Naive thymus-derived CD4-positive, alpha-beta T cell (primary cell): ENCODE measurements at regions of chr1 and their contacts with region 1.

Region 1: GRCh38 chr1:180631766-180632325 is at the start of gene XPR1:
- DNase-seq: peak; percentile 80 to 99 (median 96)
- ATAC-seq: peak; percentile 99
- H3K4me3 ChIP-seq: peak within 1 kb of the TSS; percentile 85
- H3K4me3 Mint-ChIP-seq: no peak within 1 kb of the TSS
- H3K27ac ChIP-seq: peak within 1 kb of the TSS; percentile 94
- H3K27ac Mint-ChIP-seq: peak within 1 kb of the TSS in 5 of 9 donors; percentile 91 to 95 (median 93)
- H3K4me1 ChIP-seq: peaks cover 12 to 16% of the 10 kb centered on the region in 2 donors
- H3K4me1 Mint-ChIP-seq: peaks cover 0 to 19% (median 13%) of the 10 kb centered on the region in 7 donors
- H3K27me3 ChIP-seq: no peaks in the 10 kb centered on the region
- H3K27me3 Mint-ChIP-seq: peaks cover 0 to 10% (median 5%) of the 10 kb centered on the region in 5 donors
- total RNA-seq, gene XPR1: 12.9 to 19.7 (median 15.4) TPM

Region 2: DNA sequence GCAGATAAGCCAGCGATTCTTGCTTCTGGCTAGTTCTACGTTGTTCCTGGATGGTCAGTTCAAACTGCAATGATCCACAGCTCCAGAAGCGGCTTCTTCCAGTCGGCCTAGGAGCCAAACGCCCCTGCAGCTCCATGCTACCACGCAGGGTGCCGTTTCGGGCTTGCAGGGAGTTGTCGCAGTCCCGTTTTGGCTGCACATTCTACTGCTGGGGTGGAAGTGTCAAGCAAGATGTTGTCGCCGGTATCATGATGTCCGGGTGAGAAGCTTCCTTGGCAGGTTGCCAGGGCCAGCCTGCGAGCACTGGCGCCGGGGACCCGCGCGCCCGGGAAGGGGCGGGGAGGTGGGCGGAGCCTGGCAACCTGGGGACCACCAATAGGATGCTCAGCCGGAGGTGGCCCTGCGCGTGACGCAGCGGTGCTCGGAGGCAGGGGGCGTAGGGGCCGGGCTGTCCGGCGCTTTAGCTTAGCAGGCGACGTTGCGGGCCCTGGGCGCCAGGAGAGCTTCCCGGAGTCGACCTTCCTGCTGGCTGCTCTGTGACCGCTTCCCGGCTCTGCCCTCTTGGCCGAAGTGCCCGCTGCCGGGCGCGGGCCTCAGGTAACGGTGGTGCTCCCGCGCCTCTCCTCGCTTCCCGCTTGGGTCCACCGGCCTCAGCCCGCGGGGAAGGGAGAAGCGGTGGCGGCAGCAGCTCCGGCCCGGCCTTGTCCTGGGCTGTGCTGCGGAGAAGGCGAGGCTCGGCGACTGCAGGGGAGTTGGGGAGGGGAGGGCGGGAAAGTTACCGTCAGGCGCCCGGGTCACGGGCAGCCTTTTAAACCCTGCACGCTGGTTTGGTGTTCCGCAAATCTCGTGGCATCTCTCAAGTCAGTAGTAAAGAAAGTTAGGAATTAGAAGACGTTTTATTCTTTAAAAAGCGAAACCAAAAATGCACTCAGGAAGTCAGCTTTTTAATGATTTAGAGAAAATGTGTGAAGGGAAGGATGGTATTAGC is 1338.2 kb before region 1 on chr1 and contains the start of gene SOAT1:
- CTCF ChIA-PET with region 1: no interaction called
- POLR2A ChIA-PET with region 1: no interaction called
- intact Hi-C with region 1: loop called in 1 of 2 experiments (anchors 10 kb)
- DNase-seq: peak; percentile 85 to 94 (median 90)
- ATAC-seq: peak; percentile 98
- H3K4me3 ChIP-seq: peak within 1 kb of the TSS; percentile 78
- H3K4me3 Mint-ChIP-seq: peak within 1 kb of the TSS; percentile 83 to 97 (median 92)
- H3K27ac ChIP-seq: peak within 1 kb of the TSS; percentile 96
- H3K27ac Mint-ChIP-seq: peak within 1 kb of the TSS; percentile 79 to 97 (median 93)
- H3K4me1 ChIP-seq: peaks cover 21 to 33% of the 10 kb centered on the region in 2 donors
- H3K4me1 Mint-ChIP-seq: peaks cover 28 to 51% (median 45%) of the 10 kb centered on the region in 7 donors
- H3K27me3 ChIP-seq: no peaks in the 10 kb centered on the region
- H3K27me3 Mint-ChIP-seq: no peaks in the 10 kb centered on the region
- total RNA-seq, gene SOAT1: 40.6 to 52.8 (median 45.0) TPM

Region 3: DNA sequence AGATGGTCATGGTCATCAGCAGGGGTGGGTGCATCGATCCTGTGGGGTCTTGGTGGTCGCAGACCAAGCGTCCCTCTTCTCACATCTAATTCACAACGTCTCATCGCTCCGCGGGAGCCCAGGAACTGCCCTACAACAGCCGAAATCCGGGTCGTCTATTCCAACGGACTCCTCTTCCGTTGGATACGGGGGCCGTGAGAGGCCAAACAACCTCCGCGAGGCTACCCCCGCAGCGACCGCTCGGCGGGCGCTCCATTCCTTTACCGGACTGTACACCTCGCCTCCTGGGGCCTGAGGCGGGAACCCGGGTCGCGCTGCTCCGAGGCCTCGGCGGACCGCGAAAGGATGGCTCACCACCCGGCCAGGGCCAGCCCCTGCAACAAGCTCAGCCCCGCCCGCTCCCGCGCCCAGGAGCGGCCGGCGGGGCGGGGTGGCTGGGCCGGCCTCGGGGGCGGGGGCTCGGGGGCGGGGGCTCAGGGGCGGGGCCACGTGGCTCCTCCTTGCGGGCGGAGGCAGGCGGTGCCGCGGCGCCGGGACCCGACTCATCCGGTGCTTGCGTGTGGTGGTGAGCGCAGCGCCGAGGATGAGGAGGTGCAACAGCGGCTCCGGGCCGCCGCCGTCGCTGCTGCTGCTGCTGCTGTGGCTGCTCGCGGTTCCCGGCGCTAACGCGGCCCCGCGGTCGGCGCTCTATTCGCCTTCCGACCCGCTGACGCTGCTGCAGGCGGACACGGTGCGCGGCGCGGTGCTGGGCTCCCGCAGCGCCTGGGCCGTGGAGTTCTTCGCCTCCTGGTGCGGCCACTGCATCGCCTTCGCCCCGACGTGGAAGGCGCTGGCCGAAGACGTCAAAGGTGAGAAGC is 477.3 kb before region 1 on chr1 and contains the start of gene QSOX1:
- CTCF ChIA-PET with region 1: no interaction called
- POLR2A ChIA-PET with region 1: no interaction called
- intact Hi-C with region 1: loop called (anchors 5 kb)
- DNase-seq: peak; percentile 81 to 89 (median 86)
- ATAC-seq: peak; percentile 97
- H3K4me3 ChIP-seq: peak within 1 kb of the TSS; percentile 94
- H3K4me3 Mint-ChIP-seq: peak within 1 kb of the TSS; percentile 80 to 99 (median 91)
- H3K27ac ChIP-seq: peak within 1 kb of the TSS; percentile 78
- H3K27ac Mint-ChIP-seq: peak within 1 kb of the TSS; percentile 81 to 95 (median 86)
- H3K4me1 ChIP-seq: peaks cover 7 to 20% of the 10 kb centered on the region in 2 donors
- H3K4me1 Mint-ChIP-seq: peaks cover 24 to 45% (median 37%) of the 10 kb centered on the region in 7 donors
- H3K27me3 ChIP-seq: no peaks in the 10 kb centered on the region
- H3K27me3 Mint-ChIP-seq: no peaks in the 10 kb centered on the region
- total RNA-seq, gene QSOX1: 22.1 to 55.6 (median 25.6) TPM

Region 4: GRCh38 chr1:180533266-180533987 is 98.4 kb before region 1 on chr1:
- CTCF ChIA-PET with region 1: no interaction called
- POLR2A ChIA-PET with region 1: no interaction called
- intact Hi-C with region 1: loop called in 1 of 2 experiments (anchors 10 kb)
- DNase-seq: peak; percentile 21 to 65 (median 40)
- ATAC-seq: peak; percentile 81
- H3K4me3 ChIP-seq: no peak overlapping the region
- H3K4me3 Mint-ChIP-seq: no peak overlapping the region
- H3K27ac ChIP-seq: no peak overlapping the region
- H3K27ac Mint-ChIP-seq: no peak overlapping the region
- H3K4me1 ChIP-seq: no peaks in the 10 kb centered on the region
- H3K4me1 Mint-ChIP-seq: peaks cover 0 to 6% (median 0%) of the 10 kb centered on the region in 7 donors
- H3K27me3 ChIP-seq: peaks cover 0 to 4% of the 10 kb centered on the region in 2 donors
- H3K27me3 Mint-ChIP-seq: peaks cover 0 to 34% (median 0%) of the 10 kb centered on the region in 5 donors

Region 5: DNA sequence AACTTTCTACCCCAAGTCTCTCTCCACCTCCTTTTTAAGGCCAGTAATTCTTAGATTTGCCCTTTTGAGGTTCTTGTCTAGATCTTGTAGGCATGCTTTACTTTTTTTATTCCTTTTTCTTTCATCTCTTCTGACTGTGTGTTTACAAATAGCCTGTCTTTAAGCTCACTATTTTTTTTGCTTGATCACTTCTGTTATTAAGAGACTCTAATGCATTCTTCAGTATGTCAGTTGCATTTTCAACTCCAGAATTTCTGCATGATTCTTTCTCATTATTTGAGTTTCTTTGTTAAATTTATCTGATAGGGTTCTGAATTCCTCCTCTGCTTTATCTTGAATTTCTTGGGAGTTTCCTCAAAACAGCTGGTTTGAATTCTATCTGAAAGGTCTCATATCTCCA is 30.9 kb after region 1 on chr1:
- CTCF ChIA-PET with region 1: no interaction called
- POLR2A ChIA-PET with region 1: no interaction called
- intact Hi-C with region 1: no loop called
- DNase-seq: no peak
- ATAC-seq: no peak
- H3K4me3 ChIP-seq: no peak overlapping the region
- H3K4me3 Mint-ChIP-seq: no peak overlapping the region
- H3K27ac ChIP-seq: no peak overlapping the region
- H3K27ac Mint-ChIP-seq: no peak overlapping the region
- H3K4me1 ChIP-seq: no peaks in the 10 kb centered on the region
- H3K4me1 Mint-ChIP-seq: peaks cover 0 to 27% (median 16%) of the 10 kb centered on the region in 7 donors
- H3K27me3 ChIP-seq: no peaks in the 10 kb centered on the region
- H3K27me3 Mint-ChIP-seq: no peaks in the 10 kb centered on the region

Region 6: DNA sequence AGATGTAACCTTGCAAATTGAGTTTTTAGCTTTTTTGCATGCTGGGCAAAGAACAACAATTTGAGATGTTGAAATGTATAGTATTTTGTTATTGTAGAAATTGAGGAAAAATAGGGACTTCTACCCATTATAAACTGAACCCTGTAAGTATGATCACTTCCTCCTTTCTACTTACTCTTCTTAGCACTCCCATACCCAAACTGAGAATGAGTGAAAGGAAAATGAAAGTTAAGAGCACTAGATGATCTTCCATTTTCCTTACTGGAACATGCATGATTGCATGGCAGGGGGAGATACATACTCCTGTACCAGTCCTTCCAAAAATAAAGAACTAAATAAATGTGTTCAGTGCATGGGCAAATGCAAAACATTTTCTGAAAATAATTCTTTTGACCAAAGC is 173.5 kb after region 1 on chr1:
- CTCF ChIA-PET with region 1: no interaction called
- POLR2A ChIA-PET with region 1: no interaction called
- intact Hi-C with region 1: no loop called
- DNase-seq: no peak
- ATAC-seq: no peak
- H3K4me3 ChIP-seq: no peak overlapping the region
- H3K4me3 Mint-ChIP-seq: peak overlapping the region in 1 of 10 donors; percentile 29
- H3K27ac ChIP-seq: no peak overlapping the region
- H3K27ac Mint-ChIP-seq: no peak overlapping the region
- H3K4me1 ChIP-seq: no peaks in the 10 kb centered on the region
- H3K4me1 Mint-ChIP-seq: peaks cover 0 to 6% (median 0%) of the 10 kb centered on the region in 7 donors
- H3K27me3 ChIP-seq: no peaks in the 10 kb centered on the region
- H3K27me3 Mint-ChIP-seq: no peaks in the 10 kb centered on the region

Region 7: GRCh38 chr1:180954005-180954800 is 322.4 kb after region 1 on chr1:
- CTCF ChIA-PET with region 1: no interaction called
- POLR2A ChIA-PET with region 1: no interaction called
- intact Hi-C with region 1: loop called in 1 of 2 experiments (anchors 2 kb)
- DNase-seq: peak; percentile 32 to 79 (median 61)
- ATAC-seq: peak; percentile 91
- H3K4me3 ChIP-seq: peak overlapping the region; percentile 59
- H3K4me3 Mint-ChIP-seq: peak overlapping the region; percentile 67 to 83 (median 80)
- H3K27ac ChIP-seq: peak overlapping the region; percentile 65
- H3K27ac Mint-ChIP-seq: peak overlapping the region in 3 of 9 donors; percentile 17 to 72 (median 72)
- H3K4me1 ChIP-seq: peaks cover 0 to 6% of the 10 kb centered on the region in 2 donors
- H3K4me1 Mint-ChIP-seq: peaks cover 0 to 12% (median 4%) of the 10 kb centered on the region in 7 donors
- H3K27me3 ChIP-seq: no peaks in the 10 kb centered on the region
- H3K27me3 Mint-ChIP-seq: no peaks in the 10 kb centered on the region

Region 8: DNA sequence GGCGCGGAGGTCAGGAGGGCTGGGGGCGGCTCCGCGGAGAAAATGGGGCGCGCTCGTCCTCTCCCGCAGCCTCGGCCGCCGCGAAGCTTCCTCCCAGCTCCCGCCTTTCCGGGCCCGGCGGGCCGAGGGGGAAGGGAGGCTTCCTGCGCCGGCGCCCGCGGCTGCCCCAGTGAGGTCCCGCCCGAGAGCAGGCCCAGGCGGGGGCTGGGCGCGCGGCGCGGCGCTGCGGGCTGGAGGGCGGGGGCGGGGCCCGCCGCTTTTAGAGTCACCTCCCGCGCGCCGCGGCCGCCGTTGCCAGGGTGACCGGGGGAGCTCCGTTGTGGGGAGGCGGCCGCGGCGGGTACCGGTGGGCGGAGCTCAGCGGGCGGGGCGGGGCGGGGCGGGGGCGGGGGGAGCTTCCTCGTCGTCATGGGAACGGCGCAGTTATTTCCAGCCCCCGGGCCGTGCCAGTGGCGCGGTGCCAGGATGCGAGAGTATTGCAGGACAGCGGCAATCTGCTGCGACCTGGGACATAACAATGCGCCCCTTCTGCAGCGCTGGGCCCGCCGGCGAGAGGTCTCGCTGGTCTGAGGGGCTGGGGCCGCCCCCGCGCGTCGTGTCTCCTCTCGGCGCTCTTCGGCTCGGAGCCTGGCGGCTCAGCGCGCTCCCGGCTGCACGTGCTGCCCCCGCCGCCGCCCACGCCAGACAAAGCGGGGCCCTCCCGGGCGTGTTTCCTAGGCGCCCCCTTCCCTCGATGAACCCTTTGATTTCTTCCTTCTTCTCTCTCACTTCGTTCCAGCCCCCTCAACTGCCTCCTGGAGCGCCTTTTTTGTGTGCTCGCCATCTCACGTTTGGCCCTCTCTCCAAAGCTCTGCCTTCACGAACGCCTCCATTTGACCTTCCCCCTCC is 473.5 kb after region 1 on chr1:
- CTCF ChIA-PET with region 1: no interaction called
- POLR2A ChIA-PET with region 1: no interaction called
- intact Hi-C with region 1: loop called in 1 of 2 experiments (anchors 2 kb)
- DNase-seq: peak; percentile 81 to 94 (median 90)
- ATAC-seq: peak; percentile 94
- H3K4me3 ChIP-seq: peak overlapping the region; percentile 61
- H3K4me3 Mint-ChIP-seq: peak overlapping the region; percentile 84 to 96 (median 91)
- H3K27ac ChIP-seq: peak overlapping the region; percentile 85
- H3K27ac Mint-ChIP-seq: peak overlapping the region; percentile 69 to 97 (median 89)
- H3K4me1 ChIP-seq: peaks cover 16 to 20% of the 10 kb centered on the region in 2 donors
- H3K4me1 Mint-ChIP-seq: peaks cover 22 to 76% (median 61%) of the 10 kb centered on the region in 7 donors
- H3K27me3 ChIP-seq: no peaks in the 10 kb centered on the region
- H3K27me3 Mint-ChIP-seq: peaks cover 0 to 43% (median 0%) of the 10 kb centered on the region in 5 donors

Region 9: DNA sequence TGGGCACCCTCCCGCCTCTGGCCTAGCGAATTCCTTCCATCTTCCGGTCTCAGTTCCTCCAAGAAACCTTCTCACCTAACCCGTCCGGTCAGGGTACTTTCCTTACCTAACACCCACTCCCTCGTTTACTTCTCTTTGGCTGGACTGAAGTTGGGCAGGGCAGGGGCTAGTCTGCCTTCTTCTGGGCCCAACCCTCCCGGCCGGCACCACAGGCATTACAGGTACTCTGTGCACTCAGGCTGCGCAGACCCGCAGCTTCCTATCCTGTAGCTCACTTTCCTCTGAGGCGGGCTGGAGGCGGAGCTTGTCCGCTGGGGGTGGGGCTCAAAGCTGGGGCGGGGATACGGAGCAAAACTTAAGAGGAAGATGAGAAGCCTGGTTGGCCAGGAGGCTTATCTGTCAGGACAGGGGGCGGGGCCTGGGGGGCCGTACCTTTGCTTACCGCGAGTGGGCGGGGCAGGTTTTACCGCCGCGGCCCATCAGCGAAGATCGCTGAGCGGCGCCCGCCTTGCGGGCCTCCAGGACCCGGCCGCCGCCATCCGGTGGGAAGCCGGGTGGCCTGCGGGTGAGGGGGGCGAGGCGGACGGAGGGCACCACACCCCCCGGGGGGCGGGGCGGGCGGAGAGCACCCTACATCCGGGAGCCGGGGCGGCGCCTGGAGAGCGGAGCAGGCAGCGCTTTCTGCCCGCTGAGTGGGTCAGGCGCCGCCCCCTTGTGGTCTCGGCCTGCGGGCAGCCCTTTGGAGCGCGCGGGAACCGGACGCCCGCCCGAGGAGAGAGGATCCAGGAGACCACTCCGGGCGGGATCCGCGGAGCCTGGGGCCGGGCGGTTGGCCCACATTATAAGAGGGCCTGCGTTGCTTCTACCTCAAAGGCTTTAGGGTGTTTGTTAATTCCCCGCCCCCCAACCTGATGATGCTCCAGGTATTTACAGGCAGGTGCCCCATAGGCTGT is 1397.8 kb after region 1 on chr1:
- CTCF ChIA-PET with region 1: no interaction called
- POLR2A ChIA-PET with region 1: no interaction called
- intact Hi-C with region 1: loop called (anchors 1 to 2 kb)
- DNase-seq: peak; percentile 95 to 98 (median 98)
- ATAC-seq: peak; percentile 97
- H3K4me3 ChIP-seq: peak overlapping the region; percentile 72
- H3K4me3 Mint-ChIP-seq: peak overlapping the region; percentile 90 to 100 (median 96)
- H3K27ac ChIP-seq: peak overlapping the region; percentile 87
- H3K27ac Mint-ChIP-seq: peak overlapping the region; percentile 94 to 100 (median 99)
- H3K4me1 ChIP-seq: peaks cover 9 to 14% of the 10 kb centered on the region in 2 donors
- H3K4me1 Mint-ChIP-seq: peaks cover 12 to 21% (median 18%) of the 10 kb centered on the region in 7 donors
- H3K27me3 ChIP-seq: no peaks in the 10 kb centered on the region
- H3K27me3 Mint-ChIP-seq: peaks cover 0 to 6% (median 0%) of the 10 kb centered on the region in 5 donors